GM10248 (cell line): ENCODE measurements at regions of chr1 and their contacts with region 1.

Region 1: DNA sequence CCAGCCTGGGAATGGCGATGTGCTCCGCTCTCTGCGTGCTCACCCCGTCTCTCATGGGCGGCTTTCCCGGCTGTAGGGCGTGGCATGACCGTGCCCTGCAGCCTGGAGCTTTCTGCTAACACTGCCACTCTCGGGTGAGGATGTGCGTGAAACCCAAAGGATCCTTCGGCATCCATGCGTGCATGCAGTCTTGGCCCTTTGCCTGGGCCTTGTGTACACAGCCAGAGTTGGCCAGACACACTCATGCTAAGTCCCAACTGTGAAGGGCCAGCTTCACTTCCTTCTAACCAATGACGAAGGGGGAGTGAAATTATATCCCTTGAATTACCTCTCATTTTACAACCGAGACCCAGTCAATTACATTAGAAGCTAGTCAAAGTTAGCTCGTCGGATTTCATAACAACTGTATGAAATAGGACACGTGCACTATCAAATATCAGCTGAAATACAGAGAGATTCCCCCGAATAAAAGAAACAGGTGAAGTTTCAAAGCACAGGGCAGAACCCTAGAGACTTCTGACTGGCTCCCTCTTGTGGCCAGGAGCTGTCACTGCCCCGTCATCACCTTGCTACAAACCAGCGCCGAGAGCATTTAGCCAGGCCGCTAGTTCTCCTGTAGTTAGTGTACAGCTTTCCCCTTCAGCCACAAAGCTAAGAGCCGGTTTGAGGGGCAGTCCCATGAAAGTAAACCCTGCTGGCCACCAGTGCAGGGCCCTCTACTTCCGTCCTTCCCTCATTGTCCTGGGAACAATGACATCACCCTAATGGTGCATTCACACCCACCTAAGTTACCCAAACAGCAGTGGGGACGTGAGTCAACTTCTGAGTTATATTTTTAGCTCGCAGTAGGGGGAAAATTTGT is 63.4 kb upstream of the COA6 start:
- DNase-seq: peak; percentile 87
- CTCF ChIP-seq: peak; percentile 93

Region 2: GRCh38 chr1:234125283-234125682 is 184.5 kb before region 1 on chr1:
- CTCF ChIA-PET with region 1: interaction called, 16 read pairs
- POLR2A ChIA-PET with region 1: no interaction called
- DNase-seq: peak; percentile 32
- CTCF ChIP-seq: no peak

Region 3: GRCh38 chr1:234154320-234155251 is 155.2 kb before region 1 on chr1:
- CTCF ChIA-PET with region 1: interaction called, 19 read pairs
- POLR2A ChIA-PET with region 1: no interaction called
- DNase-seq: peak; percentile 38
- CTCF ChIP-seq: peak; percentile 72

Region 4: GRCh38 chr1:234212764-234213657 is 96.8 kb before region 1 on chr1:
- CTCF ChIA-PET with region 1: interaction called, 39 read pairs
- POLR2A ChIA-PET with region 1: no interaction called
- DNase-seq: peak; percentile 65
- CTCF ChIP-seq: peak; percentile 46

Region 5: DNA sequence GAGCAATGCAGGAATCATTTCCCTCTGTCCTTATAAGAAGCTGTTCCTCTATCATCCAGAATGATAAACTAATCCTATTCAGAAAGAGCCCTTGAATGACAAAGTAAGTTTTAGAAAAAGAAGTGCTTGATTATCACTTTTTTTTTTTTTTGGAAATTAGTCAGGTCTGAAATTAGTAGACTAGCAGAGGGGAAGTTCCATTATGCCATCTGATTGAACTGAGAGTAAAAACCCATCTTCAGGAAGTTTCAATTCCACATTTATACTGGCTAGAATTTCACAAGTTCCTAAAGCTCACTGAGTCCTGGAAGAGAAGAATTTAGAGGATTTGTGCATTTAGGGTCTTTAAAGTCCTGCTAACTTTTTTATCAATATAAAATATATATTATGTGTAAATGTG is 65.3 kb before region 1 on chr1:
- CTCF ChIA-PET with region 1: interaction called, 11 read pairs
- POLR2A ChIA-PET with region 1: no interaction called
- DNase-seq: peak; percentile 50
- CTCF ChIP-seq: no peak

Region 6: DNA sequence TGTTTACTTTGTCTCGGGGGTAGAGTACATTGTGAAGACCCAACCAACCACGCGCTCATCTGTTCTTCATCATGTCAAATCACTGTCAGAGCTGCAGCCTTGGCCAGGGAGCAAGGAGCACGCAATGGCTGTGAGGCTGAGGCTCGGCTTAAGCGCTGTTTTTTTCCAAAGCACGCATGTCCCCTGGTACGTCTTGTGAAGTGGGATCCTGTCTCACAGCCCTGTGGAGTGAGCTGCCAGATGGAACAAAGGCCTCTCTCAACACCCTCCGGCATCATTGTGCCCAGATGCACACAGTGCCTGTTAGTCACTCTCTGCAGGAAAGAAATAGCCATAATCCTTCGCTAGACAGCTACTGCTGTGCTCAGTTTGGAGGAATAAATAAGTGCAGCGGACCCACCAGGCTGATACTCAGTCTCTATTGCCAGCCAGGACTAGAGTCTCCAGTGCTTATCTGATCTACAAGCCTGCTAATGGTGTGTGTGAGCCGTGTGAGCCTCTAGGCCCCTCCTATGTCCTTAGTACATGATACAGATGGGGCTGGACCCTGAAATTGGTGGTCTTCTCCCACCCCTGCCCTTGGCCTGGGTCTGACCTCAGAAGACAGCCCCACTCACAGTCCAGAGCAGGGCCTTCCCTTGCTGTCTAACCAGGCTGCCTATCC is 27.9 kb before region 1 on chr1:
- CTCF ChIA-PET with region 1: interaction called, 16 read pairs
- POLR2A ChIA-PET with region 1: no interaction called
- DNase-seq: no peak
- CTCF ChIP-seq: no peak

Region 7: GRCh38 chr1:234326497-234327366 is 16.9 kb after region 1 on chr1:
- CTCF ChIA-PET with region 1: interaction called, 130 read pairs
- POLR2A ChIA-PET with region 1: no interaction called
- DNase-seq: peak; percentile 73
- CTCF ChIP-seq: peak; percentile 87